AG04449 (cell line): ENCODE measurements at regions of chr12 and their contacts with region 1.

Region 1: DNA sequence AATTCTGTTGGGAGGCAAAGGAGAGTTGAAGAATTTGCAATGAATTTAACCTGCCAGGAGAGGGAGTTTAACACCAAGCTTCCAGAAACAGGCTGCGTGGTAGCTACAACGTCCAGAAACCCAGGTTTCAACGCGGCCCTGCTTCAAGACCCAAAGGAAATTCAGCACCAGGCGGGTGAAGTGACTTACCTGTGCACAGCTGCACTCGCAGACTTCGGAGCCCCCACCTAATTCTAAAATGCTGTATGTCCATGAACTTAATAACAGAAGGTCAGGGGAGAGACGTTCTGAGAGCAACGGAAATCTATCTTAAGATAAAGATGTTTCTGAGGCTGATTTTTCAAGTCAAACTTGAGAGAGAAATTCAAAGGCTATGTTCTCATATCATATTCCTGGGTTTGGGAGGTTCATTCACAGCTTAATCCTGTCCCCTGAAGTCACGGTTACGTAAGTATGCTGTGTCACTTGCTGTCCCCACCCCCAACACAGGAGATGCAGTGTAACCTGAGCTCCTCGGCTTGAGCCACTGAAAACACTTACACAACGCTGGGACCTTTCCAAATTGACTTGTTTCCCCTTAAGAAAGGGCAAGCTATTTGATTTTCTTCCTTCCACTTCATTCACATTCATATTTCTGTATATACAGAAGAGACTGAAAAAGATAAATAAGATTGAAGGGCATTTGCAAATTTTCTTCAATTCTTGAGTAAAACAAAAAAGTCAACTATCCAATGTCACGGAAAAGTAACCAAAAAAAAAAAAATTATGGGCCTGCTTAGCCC is 22.7 kb downstream of the CLIP1 start:
- DNase-seq: peak; percentile 79
- H3K4me3 ChIP-seq: no peak overlapping the region
- CTCF ChIP-seq: peak; percentile 50

Region 2: GRCh38 chr12:122382919-122383350 is 16.8 kb before region 1 on chr12:
- CTCF ChIA-PET with region 1: interaction called, 22 read pairs
- POLR2A ChIA-PET with region 1: no interaction called
- DNase-seq: no peak
- H3K4me3 ChIP-seq: no peak overlapping the region
- CTCF ChIP-seq: no peak

Region 3: GRCh38 chr12:122421821-122422729 is 22.3 kb after region 1 on chr12 and contains the start of gene CLIP1:
- CTCF ChIA-PET with region 1: interaction called, 12 read pairs
- POLR2A ChIA-PET with region 1: interaction called, 8 read pairs
- DNase-seq: no peak
- H3K4me3 ChIP-seq: peak within 1 kb of the TSS; percentile 79
- CTCF ChIP-seq: peak; percentile 68

Region 4: GRCh38 chr12:122471324-122472226 is 71.8 kb after region 1 on chr12:
- CTCF ChIA-PET with region 1: interaction called, 184 read pairs
- POLR2A ChIA-PET with region 1: interaction called, 4 read pairs
- DNase-seq: no peak
- H3K4me3 ChIP-seq: no peak overlapping the region
- CTCF ChIP-seq: peak; percentile 59

Region 5: DNA sequence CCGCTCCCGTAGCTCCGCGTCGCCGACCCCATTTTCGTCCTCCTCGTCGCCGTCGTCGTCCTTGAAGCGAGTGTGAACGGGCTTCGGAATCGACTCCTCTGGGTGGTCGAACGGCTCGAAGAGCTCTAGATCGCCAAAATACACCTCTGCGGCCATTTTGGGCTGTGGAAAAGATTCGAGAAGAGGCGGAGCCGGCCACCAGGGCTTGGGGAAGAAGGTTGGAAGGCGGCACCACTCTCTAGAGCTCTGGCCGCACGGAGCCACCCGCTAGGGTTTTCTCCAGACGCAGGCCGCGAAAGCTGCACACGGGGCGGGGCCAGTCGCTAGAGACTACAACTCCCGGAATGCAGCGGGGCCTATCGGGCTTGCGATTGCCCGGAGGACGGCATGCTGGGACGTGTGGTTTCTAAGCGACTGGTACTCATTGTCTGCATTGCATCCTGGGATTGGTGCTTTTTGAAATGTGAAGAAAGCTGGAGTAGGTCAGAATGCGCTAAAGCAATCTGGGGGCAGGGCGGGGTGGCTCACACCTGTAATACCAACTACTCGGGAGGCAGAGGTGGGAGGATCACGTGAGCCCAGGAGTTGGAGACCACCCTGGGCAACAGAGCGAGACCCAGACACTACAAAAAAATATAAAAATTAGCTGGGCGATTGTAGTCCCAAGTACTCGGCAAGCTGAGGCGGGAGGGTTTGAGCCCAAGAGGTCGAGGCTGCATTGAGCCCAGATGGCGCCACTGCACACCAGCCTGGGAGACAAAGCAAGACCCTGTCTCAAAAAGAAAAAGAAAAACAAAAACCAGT is 101.1 kb after region 1 on chr12 and contains the start of gene ZCCHC8:
- CTCF ChIA-PET with region 1: interaction called, 51 read pairs
- POLR2A ChIA-PET with region 1: interaction called, 3 read pairs
- DNase-seq: peak; percentile 91
- H3K4me3 ChIP-seq: peak within 1 kb of the TSS; percentile 89
- CTCF ChIP-seq: no peak

Region 6: GRCh38 chr12:122841544-122842321 is 441.9 kb after region 1 on chr12:
- CTCF ChIA-PET with region 1: no interaction called
- POLR2A ChIA-PET with region 1: no interaction called
- DNase-seq: peak; percentile 49
- H3K4me3 ChIP-seq: no peak overlapping the region
- CTCF ChIP-seq: no peak